ENCODE measurements at regions of chr19 and their contacts with region 1.

Region 1: GRCh38 chr19:19404879-19405860 is at the start of gene GATAD2A:
- DNase-seq: peak; percentile 85 to 99 (median 90)
- ATAC-seq: peak; percentile 96
- H3K4me3 ChIP-seq: peak within 1 kb of the TSS; percentile 65
- H3K4me3 Mint-ChIP-seq: peak within 1 kb of the TSS; percentile 89 to 97 (median 94)
- H3K27ac ChIP-seq: peak within 1 kb of the TSS; percentile 86
- H3K27ac Mint-ChIP-seq: peak within 1 kb of the TSS; percentile 86 to 98 (median 92)
- H3K4me1 ChIP-seq: peaks cover 26 to 38% of the 10 kb centered on the region in 2 donors
- H3K4me1 Mint-ChIP-seq: peaks cover 37 to 70% (median 66%) of the 10 kb centered on the region in 7 donors
- H3K27me3 ChIP-seq: no peaks in the 10 kb centered on the region
- H3K27me3 Mint-ChIP-seq: no peaks in the 10 kb centered on the region
- total RNA-seq, gene GATAD2A: 97.9 to 123 (median 116) TPM

Region 2: GRCh38 chr19:19063183-19064097 is 341.7 kb before region 1 on chr19 and contains the start of gene SLC25A42:
- CTCF ChIA-PET with region 1: no interaction called
- POLR2A ChIA-PET with region 1: no interaction called
- intact Hi-C with region 1: loop called in 1 of 2 experiments (anchors 5 kb)
- DNase-seq: peak; percentile 93 to 100 (median 99)
- ATAC-seq: peak; percentile 95
- H3K4me3 ChIP-seq: peak within 1 kb of the TSS; percentile 82
- H3K4me3 Mint-ChIP-seq: peak within 1 kb of the TSS; percentile 83 to 99 (median 92)
- H3K27ac ChIP-seq: peak within 1 kb of the TSS; percentile 83
- H3K27ac Mint-ChIP-seq: peak within 1 kb of the TSS; percentile 75 to 98 (median 83)
- H3K4me1 ChIP-seq: peaks cover 11 to 15% of the 10 kb centered on the region in 2 donors
- H3K4me1 Mint-ChIP-seq: peaks cover 5 to 41% (median 35%) of the 10 kb centered on the region in 7 donors
- H3K27me3 ChIP-seq: no peaks in the 10 kb centered on the region
- H3K27me3 Mint-ChIP-seq: no peaks in the 10 kb centered on the region
- total RNA-seq, gene SLC25A42: 19.0 to 36.1 (median 21.6) TPM

Region 3: DNA sequence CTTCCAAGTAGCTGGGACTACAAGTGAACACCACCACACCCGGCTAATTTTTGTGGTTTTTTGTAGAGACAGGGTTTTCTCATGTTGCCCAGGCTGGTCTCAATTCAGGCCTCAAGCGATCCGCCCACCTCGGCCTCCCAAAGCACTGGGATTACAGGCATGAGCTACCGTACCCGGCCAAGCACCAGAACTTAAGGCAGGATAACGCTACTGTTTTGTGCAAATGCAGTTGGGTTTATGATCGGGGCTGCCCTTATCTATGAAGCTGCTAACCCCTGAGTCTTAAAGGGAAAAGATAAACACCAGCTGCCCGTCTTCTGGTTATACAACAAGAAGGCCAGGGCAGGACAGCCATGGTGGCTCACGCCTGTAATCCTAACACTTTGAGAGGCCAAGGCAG is 119.5 kb before region 1 on chr19:
- CTCF ChIA-PET with region 1: no interaction called
- POLR2A ChIA-PET with region 1: no interaction called
- intact Hi-C with region 1: no loop called
- DNase-seq: no peak
- ATAC-seq: no peak
- H3K4me3 ChIP-seq: no peak overlapping the region
- H3K4me3 Mint-ChIP-seq: no peak overlapping the region
- H3K27ac ChIP-seq: no peak overlapping the region
- H3K27ac Mint-ChIP-seq: no peak overlapping the region
- H3K4me1 ChIP-seq: no peaks in the 10 kb centered on the region
- H3K4me1 Mint-ChIP-seq: no peaks in the 10 kb centered on the region
- H3K27me3 ChIP-seq: no peaks in the 10 kb centered on the region
- H3K27me3 Mint-ChIP-seq: no peaks in the 10 kb centered on the region

Region 4: GRCh38 chr19:19361075-19361594 is 44.0 kb before region 1 on chr19:
- CTCF ChIA-PET with region 1: interaction called, 10 read pairs
- POLR2A ChIA-PET with region 1: interaction called, 30 read pairs
- intact Hi-C with region 1: loop called (anchors 1 kb)
- DNase-seq: peak; percentile 40 to 70 (median 57)
- ATAC-seq: peak; percentile 79
- H3K4me3 ChIP-seq: no peak overlapping the region
- H3K4me3 Mint-ChIP-seq: peak overlapping the region in 8 of 10 donors; percentile 7 to 73 (median 54)
- H3K27ac ChIP-seq: no peak overlapping the region
- H3K27ac Mint-ChIP-seq: peak overlapping the region in 8 of 9 donors; percentile 5 to 78 (median 68)
- H3K4me1 ChIP-seq: peaks cover 15 to 21% of the 10 kb centered on the region in 2 donors
- H3K4me1 Mint-ChIP-seq: peaks cover 18 to 51% (median 35%) of the 10 kb centered on the region in 7 donors
- H3K27me3 ChIP-seq: no peaks in the 10 kb centered on the region
- H3K27me3 Mint-ChIP-seq: no peaks in the 10 kb centered on the region

Region 5: DNA sequence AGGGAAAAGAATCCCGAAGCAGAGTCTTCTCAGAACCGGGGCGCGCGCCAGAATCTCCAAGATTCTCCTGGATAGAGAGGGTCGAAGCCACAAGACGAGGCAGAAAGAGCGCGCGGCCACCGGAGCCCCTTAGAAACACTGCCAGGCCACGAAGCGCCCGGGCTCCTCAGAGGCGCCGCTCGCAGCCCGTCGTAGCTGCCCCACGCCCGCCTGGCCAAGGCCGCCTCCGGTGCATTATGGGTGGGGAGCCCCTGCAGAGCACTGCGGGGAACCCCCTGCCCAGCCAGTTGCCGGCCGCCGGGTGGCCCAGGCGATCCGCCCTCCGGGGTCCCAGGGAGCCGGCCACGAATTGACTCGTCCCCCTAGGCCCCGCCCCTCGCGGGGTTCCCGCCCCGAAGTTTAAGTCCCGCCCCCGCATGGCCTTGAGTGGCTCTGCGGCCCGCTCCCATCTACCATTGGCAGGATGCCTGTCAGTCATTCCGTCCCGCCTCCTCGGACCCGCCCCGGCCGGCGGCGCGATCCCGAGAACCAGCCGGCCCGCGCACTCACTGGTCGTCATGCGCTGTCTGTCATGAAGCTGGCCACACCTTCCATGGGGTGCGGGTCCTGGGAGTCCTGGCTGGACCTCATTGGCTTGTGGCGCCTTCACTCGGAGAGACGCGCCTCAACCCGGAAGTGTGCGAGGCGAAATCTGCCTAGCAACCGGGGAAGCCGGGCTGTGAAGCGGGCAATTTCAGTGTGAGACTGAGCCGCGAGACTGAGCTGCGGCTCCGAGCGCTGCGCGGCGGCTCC is 19.9 kb before region 1 on chr19:
- CTCF ChIA-PET with region 1: interaction called, 4 read pairs
- POLR2A ChIA-PET with region 1: interaction called, 14 read pairs
- intact Hi-C with region 1: loop called (anchors 1 kb)
- DNase-seq: peak; percentile 95 to 100 (median 99)
- ATAC-seq: peak; percentile 93
- H3K4me3 ChIP-seq: peak overlapping the region; percentile 81
- H3K4me3 Mint-ChIP-seq: peak overlapping the region; percentile 89 to 99 (median 94)
- H3K27ac ChIP-seq: peak overlapping the region; percentile 88
- H3K27ac Mint-ChIP-seq: peak overlapping the region; percentile 25 to 96 (median 93)
- H3K4me1 ChIP-seq: peaks cover 29 to 42% of the 10 kb centered on the region in 2 donors
- H3K4me1 Mint-ChIP-seq: peaks cover 36 to 46% (median 42%) of the 10 kb centered on the region in 7 donors
- H3K27me3 ChIP-seq: no peaks in the 10 kb centered on the region
- H3K27me3 Mint-ChIP-seq: no peaks in the 10 kb centered on the region

Region 6: GRCh38 chr19:19515764-19516519 is 110.8 kb after region 1 on chr19 and contains the start of gene NDUFA13:
- CTCF ChIA-PET with region 1: interaction called, 3 read pairs
- POLR2A ChIA-PET with region 1: interaction called, 15 read pairs
- intact Hi-C with region 1: no loop called
- DNase-seq: peak; percentile 88 to 98 (median 92)
- ATAC-seq: peak; percentile 96
- H3K4me3 ChIP-seq: peak within 1 kb of the TSS; percentile 96
- H3K4me3 Mint-ChIP-seq: peak within 1 kb of the TSS; percentile 89 to 98 (median 95)
- H3K27ac ChIP-seq: peak within 1 kb of the TSS; percentile 83
- H3K27ac Mint-ChIP-seq: peak within 1 kb of the TSS; percentile 89 to 98 (median 96)
- H3K4me1 ChIP-seq: peaks cover 13 to 14% of the 10 kb centered on the region in 2 donors
- H3K4me1 Mint-ChIP-seq: peaks cover 16 to 42% (median 27%) of the 10 kb centered on the region in 7 donors
- H3K27me3 ChIP-seq: no peaks in the 10 kb centered on the region
- H3K27me3 Mint-ChIP-seq: no peaks in the 10 kb centered on the region
- total RNA-seq, gene NDUFA13: 172 to 362 (median 176) TPM

Region 7: GRCh38 chr19:19652456-19653295 is 247.5 kb after region 1 on chr19:
- CTCF ChIA-PET with region 1: no interaction called
- POLR2A ChIA-PET with region 1: no interaction called
- intact Hi-C with region 1: no loop called
- DNase-seq: no peak
- ATAC-seq: no peak
- H3K4me3 ChIP-seq: no peak overlapping the region
- H3K4me3 Mint-ChIP-seq: peak overlapping the region in 1 of 10 donors; percentile 16
- H3K27ac ChIP-seq: no peak overlapping the region
- H3K27ac Mint-ChIP-seq: peak overlapping the region in 3 of 9 donors; percentile 47 to 69 (median 68)
- H3K4me1 ChIP-seq: no peaks in the 10 kb centered on the region
- H3K4me1 Mint-ChIP-seq: peaks cover 0 to 6% (median 0%) of the 10 kb centered on the region in 7 donors
- H3K27me3 ChIP-seq: no peaks in the 10 kb centered on the region
- H3K27me3 Mint-ChIP-seq: no peaks in the 10 kb centered on the region